CD4-positive, alpha-beta memory T cell (primary cell): ENCODE measurements at regions of chr4 and their contacts with region 1.

Region 1: GRCh38 chr4:168514249-168514852 is 17.5 kb downstream of the PALLD start:
- DNase-seq: peak in 4 of 5 donors; percentile 18 to 29 (median 22)
- H3K4me3 ChIP-seq: no peak overlapping the region
- H3K4me3 Mint-ChIP-seq: no peak overlapping the region
- H3K27ac ChIP-seq: no peak overlapping the region
- H3K27ac Mint-ChIP-seq: peak overlapping the region in 1 of 7 donors; percentile 53
- H3K4me1 ChIP-seq: peaks cover 35% of the 10 kb centered on the region
- H3K4me1 Mint-ChIP-seq: peaks cover 24 to 42% (median 33%) of the 10 kb centered on the region in 4 donors
- H3K27me3 ChIP-seq: no peaks in the 10 kb centered on the region
- H3K27me3 Mint-ChIP-seq: no peaks in the 10 kb centered on the region

Region 2: GRCh38 chr4:168917138-168917779 is 402.9 kb after region 1 on chr4:
- CTCF ChIA-PET with region 1: interaction called, 4 read pairs
- POLR2A ChIA-PET with region 1: no interaction called
- intact Hi-C with region 1: loop called (anchors 5 kb)
- DNase-seq: peak in 1 of 5 donors; percentile 7
- H3K4me3 ChIP-seq: no peak overlapping the region
- H3K4me3 Mint-ChIP-seq: no peak overlapping the region
- H3K27ac ChIP-seq: no peak overlapping the region
- H3K27ac Mint-ChIP-seq: no peak overlapping the region
- H3K4me1 ChIP-seq: no peaks in the 10 kb centered on the region
- H3K4me1 Mint-ChIP-seq: no peaks in the 10 kb centered on the region
- H3K27me3 ChIP-seq: no peaks in the 10 kb centered on the region
- H3K27me3 Mint-ChIP-seq: no peaks in the 10 kb centered on the region

Region 3: GRCh38 chr4:169485791-169486742 is 971.7 kb after region 1 on chr4:
- CTCF ChIA-PET with region 1: no interaction called
- POLR2A ChIA-PET with region 1: no interaction called
- intact Hi-C with region 1: loop called (anchors 10 kb)
- DNase-seq: peak in 4 of 5 donors; percentile 10 to 37 (median 17)
- H3K4me3 ChIP-seq: no peak overlapping the region
- H3K4me3 Mint-ChIP-seq: no peak overlapping the region
- H3K27ac ChIP-seq: no peak overlapping the region
- H3K27ac Mint-ChIP-seq: no peak overlapping the region
- H3K4me1 ChIP-seq: no peaks in the 10 kb centered on the region
- H3K4me1 Mint-ChIP-seq: peaks cover 0 to 3% (median 0%) of the 10 kb centered on the region in 4 donors
- H3K27me3 ChIP-seq: no peaks in the 10 kb centered on the region
- H3K27me3 Mint-ChIP-seq: no peaks in the 10 kb centered on the region